ENCODE measurements at regions of chr6 and their contacts with region 1.

Region 1: GRCh38 chr6:32622545-32623401 is 14.4 kb upstream of the HLA-DQA1 start:
- DNase-seq: peak; percentile 37 to 90
- ATAC-seq: peak; percentile 83 to 86 (median 84)
- H3K4me3 ChIP-seq: no peak overlapping the region
- H3K4me3 Mint-ChIP-seq: peak overlapping the region; percentile 84
- H3K27ac ChIP-seq: peak overlapping the region; percentile 97
- H3K27ac Mint-ChIP-seq: peak overlapping the region; percentile 90 to 99
- H3K4me1 ChIP-seq: peaks cover 20% of the 10 kb centered on the region
- H3K4me1 Mint-ChIP-seq: peaks cover 38 to 52% of the 10 kb centered on the region in 2 donors
- H3K27me3 ChIP-seq: no peaks in the 10 kb centered on the region
- H3K27me3 Mint-ChIP-seq: peaks cover 0 to 2% of the 10 kb centered on the region in 2 donors
- CTCF ChIP-seq: peak; percentile 36

Region 2: DNA sequence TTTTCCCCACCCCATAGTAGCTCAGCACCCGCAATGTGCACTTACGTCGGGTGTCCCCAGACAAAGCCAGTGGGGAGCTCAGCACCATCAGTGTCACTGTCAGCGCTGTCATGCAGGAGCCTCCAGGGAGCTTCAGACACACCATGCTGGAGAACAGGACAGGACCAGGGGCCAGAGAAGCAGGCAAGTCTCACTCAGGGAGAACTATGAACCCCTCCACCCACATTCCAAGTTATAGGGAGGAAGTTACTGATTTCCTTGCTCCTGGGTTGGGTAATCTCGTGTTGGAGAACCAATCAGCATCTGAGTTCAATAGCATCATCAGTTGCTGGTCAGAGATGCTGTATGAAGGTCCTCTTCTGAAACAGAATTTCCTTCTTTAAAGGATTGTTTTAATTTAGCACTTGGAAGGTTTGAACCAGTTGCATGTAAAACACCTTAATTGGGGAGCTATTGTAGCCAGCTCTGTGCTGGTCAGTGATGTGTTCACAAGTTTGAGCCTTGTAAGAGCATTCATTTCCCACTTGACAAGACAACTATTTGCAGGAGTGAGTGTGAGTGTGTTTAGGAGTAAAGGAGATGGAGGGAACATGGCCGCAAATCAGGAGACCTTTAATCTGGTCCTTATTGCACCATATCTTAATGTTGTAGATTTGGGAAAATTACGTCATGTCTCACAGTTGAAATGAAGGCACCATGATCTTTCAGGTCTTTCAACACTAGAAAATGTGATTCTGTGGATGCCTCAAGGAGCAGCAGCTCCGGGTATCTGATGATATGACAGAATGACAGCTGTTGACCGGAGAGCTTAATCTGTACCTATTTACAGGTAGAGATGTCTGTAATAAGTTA is 32.9 kb before region 1 on chr6 and contains the start of gene HLA-DRB1:
- intact Hi-C with region 1: loop called (anchors 2 kb)
- DNase-seq: peak; percentile 38 to 59
- ATAC-seq: peak; percentile 96 to 97 (median 96)
- H3K4me3 ChIP-seq: peak within 1 kb of the TSS; percentile 36
- H3K4me3 Mint-ChIP-seq: peak within 1 kb of the TSS; percentile 78
- H3K27ac ChIP-seq: peak within 1 kb of the TSS; percentile 73
- H3K27ac Mint-ChIP-seq: peak within 1 kb of the TSS; percentile 27 to 87
- H3K4me1 ChIP-seq: no peaks in the 10 kb centered on the region
- H3K4me1 Mint-ChIP-seq: peaks cover 40 to 44% of the 10 kb centered on the region in 2 donors
- H3K27me3 ChIP-seq: no peaks in the 10 kb centered on the region
- H3K27me3 Mint-ChIP-seq: peaks cover 6% of the 10 kb centered on the region in 2 donors
- CTCF ChIP-seq: no peak
- total RNA-seq, gene HLA-DRB1: 42.8 to 123 (median 53.9) TPM

Region 3: DNA sequence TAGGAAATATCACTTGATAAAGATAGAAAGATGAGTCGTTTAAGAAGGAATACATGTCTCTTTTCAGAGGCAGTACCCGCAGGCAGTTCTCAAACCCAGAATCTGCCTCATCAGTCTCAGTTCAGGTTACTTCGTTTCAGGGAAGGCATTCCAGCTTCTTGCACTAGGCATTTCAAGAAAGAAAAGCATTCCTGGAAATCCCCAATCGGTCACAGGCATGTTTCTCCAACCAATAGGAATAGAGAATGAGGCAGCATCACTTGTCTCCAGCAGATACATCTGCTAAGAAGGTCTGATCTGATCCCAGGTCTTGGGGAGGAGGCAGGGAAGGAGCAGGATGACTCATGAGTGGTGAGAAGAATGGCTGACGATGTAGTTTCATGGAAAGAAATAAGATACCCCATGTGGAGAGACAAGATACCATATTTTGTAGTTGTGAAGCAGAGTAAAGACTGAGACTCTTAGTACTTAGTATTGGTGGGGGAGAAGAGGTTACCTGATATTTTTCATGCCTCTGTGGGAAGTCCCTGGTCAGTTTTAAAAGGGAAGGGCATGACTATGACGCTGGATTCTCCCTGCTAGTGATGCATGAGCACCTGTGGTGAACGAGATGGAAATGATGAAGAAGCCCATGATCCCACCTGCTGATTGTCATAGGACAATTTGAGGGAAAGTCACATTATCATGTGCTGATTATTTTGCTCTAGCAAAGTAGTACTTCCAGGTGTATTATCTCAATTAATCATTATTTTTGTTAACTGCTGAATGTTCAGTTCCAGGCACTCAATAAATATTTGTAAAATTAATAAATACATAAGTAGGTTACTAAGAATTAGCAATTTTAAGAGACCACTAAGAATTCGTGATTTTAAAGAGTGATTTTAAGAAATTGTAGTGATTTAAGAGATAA is 12.8 kb before region 1 on chr6:
- intact Hi-C with region 1: loop called (anchors 1 kb)
- DNase-seq: peak; percentile 20 to 95
- ATAC-seq: peak; percentile 96 to 99 (median 99)
- H3K4me3 ChIP-seq: peak overlapping the region; percentile 18
- H3K4me3 Mint-ChIP-seq: no peak overlapping the region
- H3K27ac ChIP-seq: peak overlapping the region; percentile 80
- H3K27ac Mint-ChIP-seq: no peak overlapping the region
- H3K4me1 ChIP-seq: no peaks in the 10 kb centered on the region
- H3K4me1 Mint-ChIP-seq: peaks cover 0 to 2% of the 10 kb centered on the region in 2 donors
- H3K27me3 ChIP-seq: no peaks in the 10 kb centered on the region
- H3K27me3 Mint-ChIP-seq: peaks cover 0 to 5% of the 10 kb centered on the region in 2 donors
- CTCF ChIP-seq: no peak

Region 4: DNA sequence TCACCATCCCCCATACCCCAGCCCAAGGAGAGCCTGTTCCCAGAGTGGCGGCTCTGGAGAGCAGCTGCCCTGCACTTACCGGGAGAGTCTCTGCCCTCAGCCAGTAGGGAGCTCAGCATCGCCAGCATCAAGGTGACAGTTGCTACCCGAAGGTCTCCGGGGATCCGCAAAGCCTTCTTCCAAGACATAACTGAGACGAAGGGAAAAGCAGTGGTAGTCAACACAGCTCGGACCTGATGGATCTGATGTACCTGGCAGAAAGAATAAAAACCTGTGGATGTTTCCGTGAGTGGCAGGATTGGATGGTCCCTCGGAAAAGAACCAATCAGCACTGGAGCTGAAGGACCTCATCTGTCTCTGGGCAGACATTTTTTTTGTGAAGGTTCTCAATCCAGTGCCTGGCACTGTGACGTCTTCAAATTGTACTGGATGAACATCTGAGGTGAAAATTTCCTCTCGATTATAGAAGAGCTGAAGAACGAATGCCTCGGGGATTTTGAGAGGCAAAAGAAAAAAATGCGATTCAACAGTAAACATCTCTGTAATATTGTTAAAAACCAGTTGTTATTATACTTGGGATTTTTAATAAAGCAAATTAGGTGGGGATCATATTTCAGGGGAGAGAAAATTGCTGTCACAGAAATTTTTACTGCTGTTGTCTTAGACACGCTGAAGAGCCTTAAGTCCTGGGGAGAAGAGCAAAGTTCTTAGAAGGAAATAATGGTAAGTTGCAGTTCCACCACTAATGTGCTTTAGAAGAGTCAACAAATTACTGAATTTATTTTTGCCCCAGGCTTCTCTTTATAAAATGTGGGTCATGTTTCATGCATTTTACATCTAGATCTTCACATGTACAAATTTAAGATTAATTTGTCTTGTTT is 43.9 kb after region 1 on chr6 and contains the start of gene HLA-DQB1:
- intact Hi-C with region 1: loop called (anchors 1 kb)
- DNase-seq: peak; percentile 60 to 78
- ATAC-seq: peak; percentile 72 to 81 (median 73)
- H3K4me3 ChIP-seq: peak within 1 kb of the TSS; percentile 43
- H3K4me3 Mint-ChIP-seq: peak within 1 kb of the TSS; percentile 85
- H3K27ac ChIP-seq: peak within 1 kb of the TSS; percentile 84
- H3K27ac Mint-ChIP-seq: peak within 1 kb of the TSS; percentile 80 to 92
- H3K4me1 ChIP-seq: peaks cover 14% of the 10 kb centered on the region
- H3K4me1 Mint-ChIP-seq: peaks cover 23 to 41% of the 10 kb centered on the region in 2 donors
- H3K27me3 ChIP-seq: no peaks in the 10 kb centered on the region
- H3K27me3 Mint-ChIP-seq: peaks cover 17 to 51% of the 10 kb centered on the region in 2 donors
- CTCF ChIP-seq: no peak
- total RNA-seq, gene HLA-DQB1: 24.8 to 97.3 (median 25.5) TPM

Region 5: GRCh38 chr6:32685603-32686002 is 62.8 kb after region 1 on chr6:
- intact Hi-C with region 1: loop called (anchors 1 kb)
- DNase-seq: peak in 1 of 2 donors; percentile 88
- ATAC-seq: peak; percentile 90 to 96 (median 95)
- H3K4me3 ChIP-seq: no peak overlapping the region
- H3K4me3 Mint-ChIP-seq: peak overlapping the region; percentile 67
- H3K27ac ChIP-seq: peak overlapping the region; percentile 76
- H3K27ac Mint-ChIP-seq: peak overlapping the region; percentile 77 to 90
- H3K4me1 ChIP-seq: peaks cover 4% of the 10 kb centered on the region
- H3K4me1 Mint-ChIP-seq: peaks cover 27 to 39% of the 10 kb centered on the region in 2 donors
- H3K27me3 ChIP-seq: no peaks in the 10 kb centered on the region
- H3K27me3 Mint-ChIP-seq: peaks cover 8 to 24% of the 10 kb centered on the region in 2 donors
- CTCF ChIP-seq: no peak

Region 6: GRCh38 chr6:32894080-32895005 is 271.6 kb after region 1 on chr6:
- intact Hi-C with region 1: no loop called
- DNase-seq: peak; percentile 94 to 97
- ATAC-seq: peak; percentile 97 to 99 (median 98)
- H3K4me3 ChIP-seq: peak overlapping the region; percentile 88
- H3K4me3 Mint-ChIP-seq: peak overlapping the region; percentile 98
- H3K27ac ChIP-seq: peak overlapping the region; percentile 95
- H3K27ac Mint-ChIP-seq: peak overlapping the region; percentile 91 to 97
- H3K4me1 ChIP-seq: peaks cover 26% of the 10 kb centered on the region
- H3K4me1 Mint-ChIP-seq: peaks cover 42 to 47% of the 10 kb centered on the region in 2 donors
- H3K27me3 ChIP-seq: no peaks in the 10 kb centered on the region
- H3K27me3 Mint-ChIP-seq: no peaks in the 10 kb centered on the region
- CTCF ChIP-seq: no peak

Measured in natural killer cell (primary cell).